K562 (cell line): ENCODE measurements at regions of chr19 and their contacts with region 1.

Region 1: GRCh38 chr19:55586976-55587668 is 6.5 kb upstream of the ZNF579 start:
- DNase-seq: peak; percentile 96 to 98 (median 98)
- ATAC-seq: peak; percentile 97
- H3K4me3 ChIP-seq: peak overlapping the region; percentile 23; the same call in 1 of the 2 replicates
- H3K27ac ChIP-seq: no peak overlapping the region
- H3K4me1 ChIP-seq: peaks cover 11 to 37% of the 10 kb centered on the region in 2 experiments; a peak in 3 of 5 replicates
- H3K27me3 ChIP-seq: peaks cover 8 to 12% of the 10 kb centered on the region in 2 experiments; a peak in 4 of 5 replicates
- CTCF ChIP-seq: no peak
- EP300 ChIP-seq: no peak
- POLR2A ChIP-seq: no peak
- RAD21 ChIP-seq: no peak

Region 2: DNA sequence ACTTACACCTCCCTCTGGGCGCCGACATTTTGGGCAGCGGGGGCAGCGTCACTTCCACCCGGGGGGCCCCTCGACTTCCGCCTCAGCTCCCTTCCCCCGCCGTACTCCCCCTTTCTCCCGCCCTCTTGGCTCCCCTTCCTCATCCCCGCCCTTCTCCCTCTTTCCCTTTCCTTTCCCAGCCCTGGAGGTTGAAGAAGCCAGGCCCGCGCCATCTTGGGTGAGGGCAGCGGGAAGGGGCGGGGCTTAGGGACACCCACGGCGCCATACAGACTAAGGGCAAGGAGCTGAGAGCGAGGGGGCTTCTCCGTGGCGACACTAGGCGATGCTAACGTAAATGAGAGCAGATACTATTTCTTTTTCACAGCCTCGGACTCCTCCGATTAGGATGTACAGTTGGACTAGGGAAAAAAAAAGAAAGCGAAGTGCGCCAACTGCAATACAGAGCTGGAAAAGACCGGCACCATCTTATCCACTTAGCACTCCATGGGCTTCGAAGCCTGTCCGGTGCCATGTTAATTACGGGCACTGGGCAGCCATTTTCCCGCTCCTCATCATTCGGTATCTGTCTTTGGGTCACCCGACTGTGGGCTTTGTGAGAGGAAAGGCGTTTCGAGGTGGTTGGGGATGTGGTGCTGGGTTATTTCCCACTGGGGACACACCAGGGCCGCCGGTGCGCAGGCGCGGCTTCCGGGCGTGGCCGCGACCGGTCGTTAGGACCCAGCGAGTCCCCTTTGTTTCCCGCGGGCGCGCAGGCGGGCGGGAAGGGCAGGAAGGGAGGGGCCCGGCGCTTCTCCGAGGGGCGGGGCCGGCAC is 12.6 kb after region 1 on chr19 and contains the start of gene FIZ1:
- CTCF ChIA-PET with region 1: no interaction called
- POLR2A ChIA-PET with region 1: interaction called, 22 read pairs
- in situ Hi-C with region 1: no loop called
- intact Hi-C with region 1: no loop called
- DNase-seq: peak; percentile 72 to 99 (median 83)
- ATAC-seq: peak; percentile 90
- H3K4me3 ChIP-seq: peak within 1 kb of the TSS; percentile 60
- H3K27ac ChIP-seq: peak within 1 kb of the TSS; percentile 100
- H3K4me1 ChIP-seq: peaks cover 24 to 38% of the 10 kb centered on the region in 2 experiments; a peak in 4 of 5 replicates
- H3K27me3 ChIP-seq: no peaks in the 10 kb centered on the region
- CTCF ChIP-seq: no peak
- EP300 ChIP-seq: peak; percentile 21; the same call in 1 of the 2 replicates
- POLR2A ChIP-seq: peak; percentile 77
- RAD21 ChIP-seq: no peak
- polyA plus RNA-seq, gene FIZ1: 0.79 to 0.81 TPM